RWPE1 (cell line): ENCODE measurements at regions of chr10 and their contacts with region 1.

Region 1: GRCh38 chr10:35126530-35127296 is at the start of gene CREM:
- DNase-seq: peak; percentile 97
- H3K27ac ChIP-seq: peak within 1 kb of the TSS; percentile 98
- CTCF ChIP-seq: peak; percentile 86

Region 2: DNA sequence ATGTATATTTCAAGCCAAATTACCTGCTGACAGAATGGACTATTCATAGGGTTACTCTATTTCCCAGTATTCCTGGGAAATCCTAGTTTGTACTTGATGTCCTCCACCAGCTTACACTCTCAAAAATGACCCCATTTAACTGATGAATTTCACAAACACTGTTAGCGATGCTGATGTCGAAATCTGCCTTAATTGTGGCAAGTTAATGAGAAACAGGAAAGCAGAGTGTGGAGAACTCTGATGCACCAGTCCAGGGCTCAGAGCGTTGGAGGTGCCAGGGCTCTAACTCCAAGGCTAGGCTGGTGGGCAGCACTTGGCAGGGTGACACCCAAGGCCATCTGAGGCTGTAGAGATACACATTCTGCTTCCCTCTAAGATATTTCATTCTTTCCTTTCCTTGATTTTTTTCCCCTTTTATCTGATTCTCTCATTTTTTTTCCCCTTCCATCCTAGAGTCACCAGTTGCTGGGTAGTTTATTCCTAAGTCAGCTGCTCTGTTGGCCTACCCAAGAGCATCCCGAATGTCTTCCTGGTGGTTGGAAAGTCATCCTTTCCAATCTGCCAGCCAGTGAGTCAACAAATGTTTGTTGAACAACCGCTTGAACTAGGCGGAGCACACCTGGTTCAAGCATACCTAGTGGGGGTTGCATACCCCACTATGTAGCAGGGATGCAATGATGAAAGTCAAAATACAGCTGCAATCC is 1267.2 kb before region 1 on chr10:
- CTCF ChIA-PET with region 1: no interaction called
- POLR2A ChIA-PET with region 1: no interaction called
- DNase-seq: no peak
- H3K27ac ChIP-seq: no peak overlapping the region
- CTCF ChIP-seq: no peak

Region 3: DNA sequence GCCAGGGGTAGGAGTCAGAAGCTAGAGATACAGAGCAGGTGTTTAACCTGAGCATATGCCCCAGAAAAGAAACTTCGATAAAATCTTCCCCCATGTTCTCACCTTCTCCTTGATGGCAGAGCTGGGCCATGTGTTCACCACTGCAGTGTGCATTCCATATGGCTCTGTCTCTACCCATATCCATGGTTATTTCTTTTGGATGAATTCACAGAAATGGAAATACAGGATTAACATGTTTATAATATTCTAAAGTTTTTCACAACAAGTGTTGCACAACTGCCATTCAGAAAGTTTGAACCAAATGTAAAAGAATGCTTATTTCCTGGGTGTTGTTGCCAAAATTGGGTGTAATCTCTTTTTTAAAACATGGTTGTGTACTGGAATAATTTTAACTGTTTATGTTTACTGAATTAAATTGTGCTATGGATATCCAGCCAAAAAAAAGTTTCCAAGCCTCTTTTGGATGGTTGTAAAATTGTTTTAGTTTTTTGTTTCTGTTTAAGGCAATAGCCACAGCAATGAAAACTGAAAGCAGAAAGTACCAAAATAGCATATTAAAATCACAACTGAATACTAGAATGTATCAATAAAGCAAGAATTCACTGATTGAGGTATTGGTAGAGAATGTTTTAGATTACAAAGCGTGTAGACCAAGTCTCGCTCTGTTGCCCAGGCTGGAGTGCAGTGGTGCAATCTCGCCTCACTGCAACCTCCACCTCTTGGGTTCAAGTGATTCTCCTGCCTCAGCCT is 189.7 kb after region 1 on chr10:
- CTCF ChIA-PET with region 1: no interaction called
- POLR2A ChIA-PET with region 1: interaction called, 12 read pairs
- DNase-seq: no peak
- H3K27ac ChIP-seq: no peak overlapping the region
- CTCF ChIP-seq: no peak